H1 (cell line): ENCODE measurements at regions of chr20 and their contacts with region 1.

Region 1: DNA sequence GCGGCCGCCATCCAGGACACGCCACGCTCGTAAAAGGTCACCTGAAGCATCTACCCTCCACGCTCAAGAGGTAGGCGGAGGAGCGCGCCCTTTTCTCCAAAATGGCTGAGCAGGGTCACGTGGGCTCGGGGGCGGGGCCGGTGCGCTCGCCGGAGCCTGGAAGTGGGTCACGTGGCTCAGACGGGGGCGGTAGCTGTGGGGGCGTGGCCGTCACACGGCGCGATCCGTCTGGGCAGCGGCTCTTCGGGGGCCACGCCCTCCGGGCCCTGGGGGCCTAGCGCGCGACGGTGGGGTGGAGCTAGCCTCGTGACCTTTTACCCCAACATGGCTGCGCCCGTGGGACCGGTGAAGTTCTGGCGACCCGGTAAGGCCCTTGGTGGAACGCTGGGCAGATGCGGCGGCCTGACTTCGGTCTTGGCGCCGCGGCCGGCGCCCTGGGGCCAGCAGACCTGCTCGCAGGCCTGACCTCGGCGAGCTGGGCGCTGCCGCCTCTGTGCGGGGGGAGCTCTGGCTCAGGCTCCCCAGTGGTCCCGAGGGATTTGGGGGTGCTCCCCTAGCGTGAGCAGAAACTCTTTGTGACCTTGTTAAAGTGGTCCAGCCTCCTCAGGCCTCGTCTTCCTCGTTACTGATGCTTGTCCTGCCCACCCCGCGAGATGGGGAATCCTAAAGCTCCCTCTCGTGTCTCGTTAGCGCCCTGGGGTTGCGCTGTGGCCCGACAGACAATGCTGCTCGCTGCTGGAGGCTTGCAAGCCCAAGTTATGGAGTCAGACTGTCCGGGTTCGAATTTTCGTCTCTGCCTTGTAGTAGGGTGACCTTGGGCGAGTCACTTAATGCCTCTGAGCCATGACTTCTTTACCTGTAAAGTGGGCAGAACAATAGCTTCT is at the start of gene DHX35:
- DNase-seq: peak; percentile 91 to 97
- H3K4me3 ChIP-seq: peak within 1 kb of the TSS; percentile 79 to 100 (median 96)
- H3K27ac ChIP-seq: peak within 1 kb of the TSS; percentile 92
- H3K4me1 ChIP-seq: peaks cover 0 to 6% (median 0%) of the 10 kb centered on the region in 4 experiments; a peak in 1 of 7 replicates
- H3K27me3 ChIP-seq: no peaks in the 10 kb centered on the region
- CTCF ChIP-seq: no peak
- EP300 ChIP-seq: no peak
- POLR2A ChIP-seq: peak; percentile 91 to 94
- RAD21 ChIP-seq: no peak
- total RNA-seq, gene DHX35: 20.1 and 21.9 TPM in 2 replicates

Region 2: DNA sequence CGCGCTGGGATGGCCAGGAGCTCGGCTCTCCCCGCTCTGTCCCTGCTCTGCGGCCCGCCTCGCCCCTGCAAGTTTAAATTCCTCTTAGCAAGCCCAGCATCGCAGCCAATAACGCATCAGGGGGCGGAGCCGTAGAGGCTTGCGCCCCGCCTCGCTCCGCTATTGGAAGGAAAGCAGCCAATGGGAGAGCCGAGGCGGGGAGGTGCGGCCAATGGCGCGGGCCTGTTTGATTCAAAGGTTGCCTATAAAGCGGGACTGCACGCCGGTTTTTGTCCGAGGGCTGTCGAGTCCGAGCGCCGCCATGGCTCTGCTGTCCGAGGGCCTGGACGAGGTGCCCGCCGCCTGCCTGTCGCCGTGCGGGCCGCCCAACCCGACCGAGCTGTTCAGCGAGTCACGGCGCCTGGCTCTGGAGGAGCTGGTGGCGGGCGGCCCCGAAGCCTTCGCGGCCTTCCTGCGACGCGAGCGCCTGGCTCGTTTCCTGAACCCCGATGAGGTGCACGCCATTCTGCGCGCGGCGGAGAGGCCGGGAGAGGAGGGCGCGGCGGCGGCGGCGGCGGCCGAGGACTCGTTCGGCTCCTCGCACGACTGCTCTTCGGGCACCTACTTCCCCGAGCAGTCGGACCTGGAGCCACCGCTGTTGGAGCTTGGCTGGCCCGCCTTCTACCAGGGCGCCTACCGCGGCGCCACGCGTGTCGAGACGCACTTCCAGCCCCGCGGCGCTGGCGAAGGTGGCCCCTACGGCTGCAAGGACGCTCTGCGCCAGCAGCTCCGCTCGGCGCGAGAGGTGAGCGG is 35.9 kb before region 1 on chr20 and contains the start of gene FAM83D:
- CTCF ChIA-PET with region 1: interaction called, 3 read pairs
- POLR2A ChIA-PET with region 1: interaction called, 56 read pairs
- DNase-seq: peak; percentile 99
- H3K4me3 ChIP-seq: peak within 1 kb of the TSS; percentile 85 to 90 (median 87)
- H3K27ac ChIP-seq: peak within 1 kb of the TSS; percentile 73; the same call in 1 of the 2 replicates
- H3K4me1 ChIP-seq: peaks cover 6 to 8% (median 6%) of the 10 kb centered on the region in 4 experiments
- H3K27me3 ChIP-seq: no peaks in the 10 kb centered on the region
- CTCF ChIP-seq: no peak
- EP300 ChIP-seq: no peak
- POLR2A ChIP-seq: peak; percentile 99
- RAD21 ChIP-seq: no peak; a peak in 1 of 4 replicates
- total RNA-seq, gene FAM83D: 61.4 and 62.6 TPM in 2 replicates

Region 3: DNA sequence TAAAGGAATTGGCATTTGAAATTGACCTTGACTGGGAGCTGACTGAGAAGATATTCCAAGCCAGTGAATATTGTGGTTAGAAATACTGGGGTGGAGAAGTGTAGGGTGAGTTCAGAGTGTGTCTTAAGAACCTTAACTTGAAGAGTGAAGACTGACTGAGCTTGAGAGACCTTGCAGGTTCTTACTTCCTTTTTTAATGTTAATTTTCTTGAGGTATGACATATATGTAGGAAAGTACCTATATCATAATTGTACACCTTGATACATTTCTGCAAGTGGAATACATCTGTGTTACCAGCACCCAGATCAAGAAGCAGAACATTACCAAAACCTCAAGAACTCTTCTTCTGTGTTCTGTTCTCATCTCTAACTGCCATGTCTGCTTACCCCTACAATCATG is 10.8 kb after region 1 on chr20:
- CTCF ChIA-PET with region 1: no interaction called
- POLR2A ChIA-PET with region 1: interaction called, 11 read pairs
- DNase-seq: no peak
- H3K4me3 ChIP-seq: no peak overlapping the region
- H3K27ac ChIP-seq: no peak overlapping the region
- H3K4me1 ChIP-seq: no peaks in the 10 kb centered on the region
- H3K27me3 ChIP-seq: no peaks in the 10 kb centered on the region
- CTCF ChIP-seq: no peak
- EP300 ChIP-seq: no peak
- POLR2A ChIP-seq: no peak
- RAD21 ChIP-seq: no peak

Region 4: GRCh38 chr20:38982316-38982715 is 20.0 kb after region 1 on chr20:
- CTCF ChIA-PET with region 1: no interaction called
- POLR2A ChIA-PET with region 1: interaction called, 18 read pairs
- DNase-seq: no peak
- H3K4me3 ChIP-seq: no peak overlapping the region
- H3K27ac ChIP-seq: no peak overlapping the region
- H3K4me1 ChIP-seq: no peaks in the 10 kb centered on the region; a peak in 1 of 7 replicates
- H3K27me3 ChIP-seq: no peaks in the 10 kb centered on the region
- CTCF ChIP-seq: no peak
- EP300 ChIP-seq: no peak
- POLR2A ChIP-seq: no peak
- RAD21 ChIP-seq: no peak